ENCODE measurements at regions of chr1 and their contacts with region 1.

Region 1: DNA sequence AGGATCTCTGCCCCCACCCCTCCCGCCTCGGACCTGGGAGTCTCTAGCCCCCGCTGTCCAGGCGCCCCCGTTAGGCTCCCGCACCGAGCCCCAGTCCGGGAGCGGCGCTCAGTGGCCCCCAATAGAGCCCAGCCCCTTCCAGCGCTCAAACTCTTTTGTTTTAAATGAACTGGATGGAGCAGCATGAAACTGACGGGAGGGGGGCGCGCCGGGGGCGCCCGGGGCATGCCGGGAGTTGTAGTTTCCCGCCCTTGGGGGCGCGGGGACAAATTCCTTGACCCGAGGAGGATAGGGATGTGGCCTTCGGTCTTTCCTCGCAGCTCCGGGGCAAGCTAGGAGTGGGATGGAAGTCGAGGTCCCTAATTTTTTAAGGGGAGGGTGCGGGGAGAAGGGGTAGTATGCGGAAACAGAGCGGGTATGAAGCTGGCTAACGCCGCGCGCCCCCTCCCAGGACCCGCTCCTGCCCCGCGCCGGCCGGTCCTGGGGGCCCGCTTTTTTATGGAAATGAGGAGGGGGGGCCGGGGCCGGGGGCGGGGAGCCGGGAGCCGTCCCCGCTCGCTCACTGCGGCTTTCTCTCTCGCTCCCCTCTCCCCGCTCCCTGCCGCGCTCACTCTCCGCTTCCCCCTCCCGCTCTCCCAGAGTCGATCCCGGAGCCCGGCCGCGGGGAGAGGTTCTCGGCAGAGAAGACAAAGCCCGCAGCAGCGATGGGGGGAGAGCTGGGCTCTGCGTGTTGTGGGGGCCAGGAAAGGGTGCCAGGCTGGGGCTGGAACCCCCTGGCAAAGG is at the start of gene MEX3A:
- DNase-seq: peak; percentile 88 to 89 (median 89)
- ATAC-seq: peak; percentile 90
- H3K4me3 ChIP-seq: peak within 1 kb of the TSS; percentile 55
- H3K27ac ChIP-seq: peak within 1 kb of the TSS; percentile 60; the same call in 2 of the 3 replicates
- H3K4me1 ChIP-seq: peaks cover 13 to 30% of the 10 kb centered on the region in 2 experiments
- H3K27me3 ChIP-seq: no peaks in the 10 kb centered on the region
- CTCF ChIP-seq: no peak
- EP300 ChIP-seq: peak; percentile 10; the same call in 1 of the 2 replicates
- POLR2A ChIP-seq: peak; percentile 37; the same call in 1 of the 2 replicates
- RAD21 ChIP-seq: no peak
- polyA plus RNA-seq, gene MEX3A: 0.36 to 0.37 TPM

Region 2: DNA sequence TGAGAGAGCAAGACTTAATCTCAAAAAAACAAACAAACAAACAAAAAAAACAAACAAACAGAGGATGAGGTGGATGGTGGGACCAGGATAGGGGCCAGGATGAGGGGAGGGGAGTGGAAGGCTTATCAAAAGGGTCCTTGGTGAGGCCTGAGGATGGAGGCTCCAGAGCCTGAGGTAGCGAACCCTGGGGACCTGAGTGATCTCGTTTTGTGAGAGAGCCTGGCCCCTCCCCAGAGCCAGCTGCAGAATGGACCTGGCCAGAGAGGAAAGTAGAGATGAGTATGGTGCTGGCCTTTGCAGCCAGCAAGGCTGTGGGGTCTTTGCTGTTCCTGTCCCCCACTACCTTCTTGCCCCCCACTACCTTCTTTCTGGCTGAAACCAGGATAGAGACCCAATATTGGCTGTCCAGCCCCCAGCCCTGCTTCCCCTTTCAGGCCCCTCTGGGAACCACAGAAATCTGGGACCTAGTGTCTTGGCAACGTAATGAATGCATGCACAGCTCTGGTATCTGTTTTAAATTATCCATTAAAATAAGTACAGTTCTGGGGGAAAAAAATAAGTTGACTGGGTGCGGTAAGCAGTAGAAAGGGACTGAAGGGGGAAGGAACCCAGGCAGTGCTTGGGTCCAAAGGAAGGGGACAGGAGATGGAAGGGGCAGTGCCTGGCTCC is 30.9 kb after region 1 on chr1:
- CTCF ChIA-PET with region 1: no interaction called
- POLR2A ChIA-PET with region 1: no interaction called
- in situ Hi-C with region 1: no loop called
- intact Hi-C with region 1: no loop called
- DNase-seq: no peak
- ATAC-seq: no peak
- H3K4me3 ChIP-seq: no peak overlapping the region
- H3K27ac ChIP-seq: peak overlapping the region; percentile 92; the same call in 2 of the 3 replicates
- H3K4me1 ChIP-seq: peaks cover 19 to 35% of the 10 kb centered on the region in 2 experiments
- H3K27me3 ChIP-seq: no peaks in the 10 kb centered on the region
- CTCF ChIP-seq: no peak
- EP300 ChIP-seq: no peak
- POLR2A ChIP-seq: no peak
- RAD21 ChIP-seq: no peak

Region 3: GRCh38 chr1:156368889-156369684 is 286.6 kb after region 1 on chr1 and contains the start of gene RHBG:
- CTCF ChIA-PET with region 1: no interaction called
- POLR2A ChIA-PET with region 1: no interaction called
- in situ Hi-C with region 1: no loop called
- intact Hi-C with region 1: loop called (anchors 10 kb)
- DNase-seq: peak in 2 of 4 experiments; percentile 75 to 79
- ATAC-seq: peak; percentile 49
- H3K4me3 ChIP-seq: no peak within 1 kb of the TSS
- H3K27ac ChIP-seq: no peak within 1 kb of the TSS
- H3K4me1 ChIP-seq: peaks cover 0 to 16% of the 10 kb centered on the region in 2 experiments; a peak in 3 of 5 replicates
- H3K27me3 ChIP-seq: peaks cover 2 to 27% of the 10 kb centered on the region in 2 experiments; a peak in 3 of 5 replicates
- CTCF ChIP-seq: no peak
- EP300 ChIP-seq: no peak
- POLR2A ChIP-seq: no peak
- RAD21 ChIP-seq: no peak
- polyA plus RNA-seq, gene RHBG: not detected